ENCODE measurements at regions of chr1 and their contacts with region 1.

Region 1: DNA sequence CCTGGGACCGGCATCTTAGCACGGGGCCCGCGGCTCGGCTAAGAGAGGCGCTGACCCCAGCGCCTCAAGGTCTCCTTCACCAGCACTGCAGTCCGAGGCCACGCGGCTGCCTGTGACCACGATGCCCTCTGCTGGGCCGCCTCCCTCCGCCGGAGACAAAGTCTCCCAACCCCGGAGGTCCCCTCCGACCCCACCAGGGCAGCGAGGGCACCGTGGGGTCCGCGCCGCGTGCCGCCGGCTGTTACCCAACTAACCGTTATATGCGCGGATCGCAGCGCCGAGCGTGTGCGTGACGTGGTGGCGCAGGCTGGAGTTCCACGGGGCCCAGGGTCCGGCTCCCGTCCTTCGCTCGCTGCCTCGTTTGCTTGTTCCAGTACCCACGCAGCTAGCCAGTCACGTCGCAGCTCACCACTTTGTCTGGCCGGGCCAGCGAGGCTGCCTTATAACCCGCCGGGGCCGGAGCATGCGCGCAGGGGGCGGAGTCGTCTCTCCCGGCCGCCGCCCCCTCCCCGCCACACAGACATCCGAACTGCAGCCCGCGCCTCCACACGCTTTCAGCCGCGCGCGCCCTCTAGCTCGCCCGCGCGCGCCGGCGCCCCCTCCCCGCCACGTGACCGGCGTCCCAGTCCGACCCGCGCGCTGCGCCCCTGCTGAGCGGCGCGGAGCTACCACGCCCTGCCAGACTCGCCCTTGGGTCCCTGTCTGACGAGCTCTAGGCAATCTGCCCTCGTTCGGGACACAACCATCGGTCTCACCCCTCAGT is at the start of gene SLC16A1:
- DNase-seq: peak; percentile 96
- total RNA-seq, gene SLC16A1: 119 TPM

Region 2: DNA sequence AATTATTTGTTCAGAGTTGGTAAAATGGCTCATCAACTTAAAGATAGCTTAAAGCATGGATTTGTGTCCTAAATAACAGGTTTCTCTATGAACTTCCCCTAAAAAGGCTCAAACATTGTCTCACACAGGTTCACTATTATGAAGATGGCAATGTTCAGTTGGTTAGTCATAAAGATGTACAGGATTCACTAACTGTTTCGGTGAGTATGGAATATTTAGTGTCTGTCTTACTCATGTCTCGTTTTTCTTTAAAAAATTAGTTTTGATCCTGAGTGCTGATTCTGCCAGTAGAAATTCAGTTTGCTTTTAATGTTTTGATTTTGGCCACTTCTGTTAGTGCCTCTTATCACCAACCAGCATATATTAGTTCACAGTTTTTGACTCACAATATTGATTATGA is 289.0 kb before region 1 on chr1:
- intact Hi-C with region 1: no loop called
- DNase-seq: no peak

Region 3: GRCh38 chr1:112809253-112809684 is 146.7 kb before region 1 on chr1:
- intact Hi-C with region 1: loop called (anchors 5 kb)
- DNase-seq: peak; percentile 82

Region 4: DNA sequence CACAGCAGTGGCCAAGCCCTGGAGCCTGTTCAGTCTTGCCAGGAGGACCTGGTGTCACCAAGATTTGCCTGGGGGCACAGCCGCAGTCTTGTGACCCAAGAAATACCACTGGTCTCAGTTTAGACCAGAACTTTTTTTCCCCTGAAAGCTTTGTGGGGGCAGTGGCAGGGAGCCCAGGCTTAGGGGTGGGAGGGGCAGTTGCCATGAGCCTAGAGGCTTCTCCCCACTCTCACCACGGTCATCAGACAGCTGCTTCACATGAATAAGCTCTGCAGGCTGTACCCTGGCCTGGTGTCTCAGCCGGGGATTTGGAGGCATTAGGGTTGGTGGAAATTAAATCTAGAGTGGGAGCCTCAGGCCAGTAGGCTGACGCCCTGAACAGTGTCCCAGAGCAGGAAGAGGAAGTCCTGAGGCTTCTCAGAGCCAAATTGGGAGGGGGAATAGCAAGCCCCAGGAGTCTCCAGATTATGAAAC is 73.7 kb before region 1 on chr1:
- intact Hi-C with region 1: loop called (anchors 2 kb)
- DNase-seq: no peak

Region 5: GRCh38 chr1:112998592-112999235 is 42.8 kb after region 1 on chr1:
- intact Hi-C with region 1: loop called (anchors 2 kb)
- DNase-seq: no peak

Region 6: GRCh38 chr1:113042285-113043143 is 86.6 kb after region 1 on chr1:
- intact Hi-C with region 1: loop called (anchors 2 kb)
- DNase-seq: peak; percentile 82